WTC11 (cell line): ENCODE measurements at regions of chr19 and their contacts with region 1.

Region 1: GRCh38 chr19:47514869-47515588 is at the start of gene NAPA:
- DNase-seq: peak; percentile 100
- ATAC-seq: peak; percentile 96
- H3K4me3 Mint-ChIP-seq: peak within 1 kb of the TSS; percentile 97
- H3K27ac Mint-ChIP-seq: peak within 1 kb of the TSS; percentile 96
- H3K4me1 Mint-ChIP-seq: peaks cover 30% of the 10 kb centered on the region
- H3K27me3 Mint-ChIP-seq: no peaks in the 10 kb centered on the region
- CTCF ChIP-seq: 0 out of 2 replicates have a peak, but pooled peaks have one; percentile 93
- total RNA-seq, gene NAPA: 58.4 to 66.8 TPM (median 61.3 TPM) in 3 replicates

Region 2: GRCh38 chr19:47447470-47448359 is 67.3 kb before region 1 on chr19:
- CTCF ChIA-PET with region 1: interaction called, 14 read pairs
- POLR2A ChIA-PET with region 1: no interaction called
- DNase-seq: peak; percentile 99
- ATAC-seq: peak; percentile 89
- H3K4me3 Mint-ChIP-seq: peak overlapping the region; percentile 79
- H3K27ac Mint-ChIP-seq: peak overlapping the region; percentile 81
- H3K4me1 Mint-ChIP-seq: peaks cover 36% of the 10 kb centered on the region
- H3K27me3 Mint-ChIP-seq: peaks cover 56% of the 10 kb centered on the region
- CTCF ChIP-seq: no peak

Region 3: GRCh38 chr19:47573071-47574026 is 58.3 kb after region 1 on chr19 and contains the start of gene ZNF541:
- CTCF ChIA-PET with region 1: interaction called, 10 read pairs
- POLR2A ChIA-PET with region 1: no interaction called
- DNase-seq: peak; percentile 31
- ATAC-seq: no peak; the same call in 1 of the 2 replicates
- H3K4me3 Mint-ChIP-seq: no peak within 1 kb of the TSS
- H3K27ac Mint-ChIP-seq: no peak within 1 kb of the TSS
- H3K4me1 Mint-ChIP-seq: peaks cover 6% of the 10 kb centered on the region
- H3K27me3 Mint-ChIP-seq: no peaks in the 10 kb centered on the region; the same call in 1 of the 2 replicates
- CTCF ChIP-seq: no peak
- total RNA-seq, gene ZNF541: 0.07 to 0.09 TPM (median 0.09 TPM) in 3 replicates

Region 4: DNA sequence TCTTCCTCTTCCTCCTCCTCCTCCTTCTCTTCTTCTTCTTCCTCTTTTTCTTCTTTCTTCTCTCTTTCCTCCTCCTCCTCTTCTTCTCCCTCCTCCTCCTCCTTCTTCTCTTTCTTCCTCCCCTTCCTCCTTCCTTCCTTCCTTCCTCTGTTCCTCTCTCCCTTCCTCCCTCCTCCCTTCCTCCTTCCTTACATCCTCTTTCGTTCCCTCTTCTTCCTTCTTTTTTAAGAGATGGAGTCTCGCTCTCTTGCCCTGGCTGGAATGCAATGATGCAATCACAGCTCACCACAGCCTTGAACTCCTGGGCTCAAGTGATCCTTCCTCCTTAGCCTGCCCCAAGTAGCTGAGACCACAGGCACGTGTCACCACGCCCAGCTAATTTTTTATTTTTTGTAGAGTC is 211.4 kb after region 1 on chr19:
- CTCF ChIA-PET with region 1: no interaction called
- POLR2A ChIA-PET with region 1: no interaction called
- DNase-seq: no peak
- ATAC-seq: no peak
- H3K4me3 Mint-ChIP-seq: no peak overlapping the region
- H3K27ac Mint-ChIP-seq: no peak overlapping the region
- H3K4me1 Mint-ChIP-seq: peaks cover 13% of the 10 kb centered on the region
- H3K27me3 Mint-ChIP-seq: no peaks in the 10 kb centered on the region; the same call in 1 of the 2 replicates
- CTCF ChIP-seq: no peak